Mucosa of descending colon (tissue), 3 donors: ENCODE measurements at regions of chr9 and their contacts with region 1.

Region 1: GRCh38 chr9:124708633-124709291 is 62.3 kb downstream of the NR6A1 start:
- DNase-seq: peak in 1 of 3 donors; percentile 63
- ATAC-seq: peak; percentile 89
- H3K4me3 ChIP-seq: no peak overlapping the region
- H3K4me1 ChIP-seq: peaks cover 9% of the 10 kb centered on the region
- CTCF ChIP-seq: no peak

Region 2: GRCh38 chr9:124457887-124458431 is 250.8 kb before region 1 on chr9:
- intact Hi-C with region 1: no loop called
- DNase-seq: peak in 1 of 3 donors; percentile 23
- ATAC-seq: no peak
- H3K4me3 ChIP-seq: no peak overlapping the region
- H3K4me1 ChIP-seq: no peaks in the 10 kb centered on the region
- CTCF ChIP-seq: no peak

Region 3: DNA sequence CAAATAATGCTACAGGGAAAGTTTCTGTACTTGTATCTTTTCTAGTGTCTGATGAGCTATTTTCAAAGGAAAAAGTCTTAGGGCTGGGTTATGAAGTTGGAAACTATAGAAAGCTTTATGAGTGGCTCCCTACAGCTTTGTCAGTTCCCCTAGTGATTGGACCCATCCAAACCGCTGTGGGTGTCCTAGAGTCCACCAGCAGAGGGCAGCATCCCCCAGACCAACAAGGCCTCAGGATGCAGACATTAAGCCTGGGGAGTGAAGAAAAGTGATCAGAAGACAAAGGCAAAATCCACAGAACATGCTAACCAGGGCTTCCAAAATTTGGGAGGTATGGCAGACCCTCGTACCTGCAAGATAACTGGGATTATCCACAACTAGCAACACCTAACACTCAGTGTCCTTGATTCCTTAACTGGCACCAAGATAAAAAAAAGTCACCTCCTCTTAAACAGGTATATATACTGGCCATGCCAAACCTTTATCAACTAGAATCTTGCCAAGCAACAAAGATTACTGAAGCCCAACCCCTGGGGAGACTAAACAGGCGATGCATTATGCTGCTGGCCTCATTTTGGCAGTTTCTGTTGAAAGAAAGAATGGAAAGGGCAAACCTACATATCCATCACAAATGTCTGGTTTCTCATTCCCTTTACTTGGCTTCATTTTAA is 91.2 kb before region 1 on chr9:
- intact Hi-C with region 1: loop called (anchors 2 to 5 kb)
- DNase-seq: peak; percentile 61 to 90 (median 86)
- ATAC-seq: peak; percentile 91
- H3K4me3 ChIP-seq: no peak overlapping the region
- H3K4me1 ChIP-seq: no peaks in the 10 kb centered on the region
- CTCF ChIP-seq: peak; percentile 82